Right ventricle myocardium inferior (tissue), 1 donor: ENCODE measurements at regions of chr6 and their contacts with region 1.

Region 1: DNA sequence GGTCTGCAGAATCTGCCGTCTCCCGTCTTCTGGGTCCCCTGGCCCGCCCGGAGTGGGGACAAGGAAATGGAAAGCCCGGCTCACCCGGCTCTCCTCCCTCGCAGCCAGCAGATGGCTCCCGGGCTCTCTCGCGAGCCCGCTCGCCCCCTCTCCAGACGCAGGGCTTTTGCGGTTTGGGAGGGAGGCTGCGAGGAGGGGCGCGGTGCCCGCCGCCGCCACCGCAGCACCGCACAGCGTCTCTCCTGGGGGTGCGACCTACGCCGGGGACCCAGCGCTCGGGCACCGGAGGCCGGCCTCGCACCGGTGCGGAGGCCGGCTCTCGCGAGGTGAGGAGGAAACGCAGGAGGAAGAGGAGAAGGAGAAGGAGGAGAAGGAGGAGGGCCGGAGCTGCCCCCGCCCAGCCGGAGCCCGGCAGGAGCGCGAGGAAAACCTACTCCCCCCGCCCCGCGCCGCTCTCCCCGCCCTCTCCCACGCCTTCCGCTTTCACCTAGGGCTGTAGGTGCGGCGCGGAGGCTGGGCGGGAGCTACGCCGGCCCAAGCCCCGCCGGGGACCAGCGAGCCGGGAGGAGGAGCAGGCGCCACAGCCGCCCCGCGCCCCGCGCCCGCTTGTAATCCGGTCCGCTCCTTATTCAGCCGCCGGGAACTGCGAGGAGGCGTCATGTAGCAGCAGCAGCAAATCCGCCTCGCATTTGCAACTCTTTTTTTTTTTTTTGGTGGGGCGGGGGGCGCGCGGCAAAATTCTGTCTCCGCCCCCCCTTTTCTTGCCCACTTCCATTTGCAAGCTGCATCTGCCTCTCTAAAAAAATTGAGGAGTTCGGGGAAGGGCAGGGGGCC is at the start of gene CARMIL1:
- DNase-seq: peak; percentile 90
- ATAC-seq: peak; percentile 95
- total RNA-seq, gene CARMIL1: 5.4 TPM

Region 2: GRCh38 chr6:25315194-25316177 is 36.4 kb after region 1 on chr6:
- intact Hi-C with region 1: no loop called
- DNase-seq: no peak
- ATAC-seq: peak; percentile 25

Region 3: GRCh38 chr6:25389471-25389870 is 110.3 kb after region 1 on chr6:
- intact Hi-C with region 1: no loop called
- DNase-seq: no peak
- ATAC-seq: no peak

Region 4: DNA sequence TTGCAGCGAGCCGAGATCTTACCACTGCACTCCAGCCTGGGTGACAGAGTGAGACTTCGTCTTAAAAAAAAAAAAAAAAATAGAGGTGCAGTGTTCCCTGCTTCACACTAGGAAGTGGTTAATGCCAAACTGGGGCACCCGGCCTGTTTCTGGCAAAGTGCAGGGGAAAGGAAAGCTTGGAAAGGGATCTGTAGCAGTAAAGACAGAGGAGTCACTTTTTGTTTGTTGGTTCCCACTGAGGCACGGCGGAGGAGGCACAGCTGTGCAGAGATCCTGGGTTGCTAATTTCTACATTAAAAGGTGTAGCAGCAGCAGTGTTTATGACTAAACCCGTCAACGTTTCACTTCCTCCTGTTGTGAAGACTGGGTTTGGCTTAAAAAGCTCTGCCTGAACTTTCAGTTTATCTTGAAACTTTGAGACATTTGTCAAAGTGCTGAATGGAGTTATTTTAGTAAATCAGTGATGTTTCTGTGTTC is 125.6 kb after region 1 on chr6:
- intact Hi-C with region 1: no loop called
- DNase-seq: no peak
- ATAC-seq: peak; percentile 21

Region 5: DNA sequence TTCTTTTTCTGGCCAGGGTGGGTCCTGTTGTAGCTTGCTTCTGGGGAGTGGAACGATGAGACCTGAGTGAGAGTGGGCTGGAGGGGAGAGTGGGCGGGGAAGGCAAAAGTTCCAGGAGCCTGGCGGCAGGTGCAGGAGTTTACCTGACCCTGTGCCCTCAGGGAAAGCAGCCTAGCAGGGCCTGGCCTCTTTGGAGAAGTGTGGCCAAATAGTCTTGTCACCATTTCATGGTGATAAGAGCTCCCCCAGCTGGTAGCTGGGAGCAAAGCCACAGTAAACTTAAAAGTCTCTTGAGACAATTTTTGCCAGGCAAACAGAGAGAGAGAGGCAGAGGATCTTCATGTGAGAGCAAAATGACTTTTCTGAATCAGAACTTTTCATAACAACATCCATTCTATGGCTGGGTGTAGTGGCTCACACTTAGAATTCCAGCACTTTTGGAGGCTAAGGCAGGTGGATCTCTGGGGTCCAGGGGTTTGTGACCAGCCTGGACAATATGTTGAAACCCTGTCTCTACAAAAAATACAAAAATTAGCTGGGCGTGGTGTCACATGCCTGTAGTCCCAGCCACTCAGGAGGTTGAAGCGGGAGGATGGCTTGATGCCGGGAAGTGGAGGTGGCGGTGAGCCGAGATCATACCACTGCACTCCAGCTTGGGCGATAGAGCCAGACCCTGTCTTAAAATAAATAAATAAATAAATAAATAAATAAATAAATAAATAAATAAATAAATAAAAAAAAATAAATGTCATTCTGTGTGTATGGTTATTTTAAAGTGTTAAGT is 211.1 kb after region 1 on chr6:
- intact Hi-C with region 1: loop called (anchors 1 kb)
- DNase-seq: peak; percentile 55
- ATAC-seq: peak; percentile 85